Right ventricle myocardium superior (tissue), 1 donor: ENCODE measurements at regions of chr1 and their contacts with region 1.

Region 1: GRCh38 chr1:184664042-184664655 is 90.5 kb downstream of the EDEM3 start:
- DNase-seq: peak; percentile 88
- ATAC-seq: peak; percentile 98

Region 2: GRCh38 chr1:184242507-184242943 is 421.6 kb before region 1 on chr1:
- intact Hi-C with region 1: loop called (anchors 10 kb)
- DNase-seq: no peak
- ATAC-seq: peak; percentile 81

Region 3: GRCh38 chr1:184386312-184387068 is 277.7 kb before region 1 on chr1 and contains the start of gene C1orf21:
- intact Hi-C with region 1: loop called (anchors 10 kb)
- DNase-seq: peak; percentile 94
- ATAC-seq: peak; percentile 96
- total RNA-seq, gene C1orf21: 47.6 TPM

Region 4: DNA sequence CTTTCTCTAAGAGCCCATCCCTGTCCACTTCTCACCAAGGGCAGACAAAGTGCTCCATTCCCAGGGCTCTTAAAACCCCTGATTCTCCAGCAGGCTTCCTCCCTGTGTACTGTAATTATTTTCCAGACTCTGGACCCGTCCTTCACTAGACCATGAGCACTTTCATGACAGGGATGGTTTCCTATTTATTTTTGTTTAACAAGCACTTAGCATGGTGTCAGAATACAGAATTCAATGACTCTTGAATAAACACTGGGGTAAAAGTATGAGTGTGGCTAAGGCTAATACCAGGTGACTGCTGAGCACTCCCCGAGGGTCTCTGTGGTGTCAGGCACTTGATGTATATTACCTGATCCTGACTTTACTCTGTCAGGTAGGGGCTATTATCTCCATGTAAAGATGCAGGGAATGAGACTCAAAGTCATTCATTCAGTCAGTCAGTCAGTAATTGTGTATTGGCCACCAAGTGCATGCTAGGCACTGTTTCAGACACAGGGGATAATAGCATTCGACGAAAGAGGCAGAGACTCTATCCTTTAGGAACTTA is 230.1 kb before region 1 on chr1:
- intact Hi-C with region 1: no loop called
- DNase-seq: no peak
- ATAC-seq: no peak

Region 5: GRCh38 chr1:184563308-184563707 is 100.8 kb before region 1 on chr1:
- intact Hi-C with region 1: loop called (anchors 5 kb)
- DNase-seq: no peak
- ATAC-seq: peak; percentile 75

Region 6: GRCh38 chr1:184595591-184595990 is 68.6 kb before region 1 on chr1:
- intact Hi-C with region 1: no loop called
- DNase-seq: no peak
- ATAC-seq: no peak

Region 7: GRCh38 chr1:184610876-184611595 is 53.1 kb before region 1 on chr1:
- intact Hi-C with region 1: loop called (anchors 10 kb)
- DNase-seq: no peak
- ATAC-seq: peak; percentile 54